H1 (cell line): ENCODE measurements at regions of chr1 and their contacts with region 1.

Region 1: GRCh38 chr1:26053718-26054560 is 8.0 kb upstream of the SLC30A2 start:
- DNase-seq: no peak
- H3K4me3 ChIP-seq: no peak overlapping the region
- H3K27ac ChIP-seq: no peak overlapping the region
- H3K4me1 ChIP-seq: 0 out of 7 replicates have a peak, but pooled peaks cover 0 to 2% (median 0%) of the 10 kb centered on the region in 4 experiments
- H3K27me3 ChIP-seq: peaks cover 0 to 6% (median 2%) of the 10 kb centered on the region in 4 experiments; a peak in 3 of 7 replicates
- CTCF ChIP-seq: no peak
- EP300 ChIP-seq: no peak
- POLR2A ChIP-seq: no peak
- RAD21 ChIP-seq: peak in 1 of 2 experiments; percentile 30; a peak in 1 of 4 replicates

Region 2: DNA sequence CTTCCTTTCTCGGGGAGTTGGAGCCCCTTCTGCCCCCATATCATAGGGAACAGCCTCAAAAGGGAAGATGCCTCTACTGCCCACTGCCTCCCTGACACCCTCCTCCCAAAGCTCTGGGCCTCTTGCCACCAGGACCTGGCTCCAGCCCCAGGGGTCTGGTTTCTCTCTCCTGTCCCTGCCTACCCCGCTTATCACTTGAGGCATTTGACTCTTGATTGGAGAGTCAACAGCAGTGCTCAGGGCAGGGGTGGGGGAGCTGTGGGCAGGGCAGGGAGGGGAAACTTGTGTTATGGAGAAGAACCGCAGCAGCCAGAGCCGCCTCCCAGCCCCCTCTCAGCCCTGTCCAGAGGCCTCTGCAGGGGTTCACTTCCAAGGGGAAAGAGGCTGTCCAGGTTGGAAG is 12.9 kb after region 1 on chr1:
- CTCF ChIA-PET with region 1: interaction called, 32 read pairs
- POLR2A ChIA-PET with region 1: interaction called, 3 read pairs
- DNase-seq: no peak
- H3K4me3 ChIP-seq: no peak overlapping the region
- H3K27ac ChIP-seq: no peak overlapping the region
- H3K4me1 ChIP-seq: peaks cover 0 to 2% (median 0%) of the 10 kb centered on the region in 4 experiments; a peak in 1 of 7 replicates
- H3K27me3 ChIP-seq: no peaks in the 10 kb centered on the region
- CTCF ChIP-seq: no peak
- EP300 ChIP-seq: no peak
- POLR2A ChIP-seq: no peak
- RAD21 ChIP-seq: no peak

Region 3: DNA sequence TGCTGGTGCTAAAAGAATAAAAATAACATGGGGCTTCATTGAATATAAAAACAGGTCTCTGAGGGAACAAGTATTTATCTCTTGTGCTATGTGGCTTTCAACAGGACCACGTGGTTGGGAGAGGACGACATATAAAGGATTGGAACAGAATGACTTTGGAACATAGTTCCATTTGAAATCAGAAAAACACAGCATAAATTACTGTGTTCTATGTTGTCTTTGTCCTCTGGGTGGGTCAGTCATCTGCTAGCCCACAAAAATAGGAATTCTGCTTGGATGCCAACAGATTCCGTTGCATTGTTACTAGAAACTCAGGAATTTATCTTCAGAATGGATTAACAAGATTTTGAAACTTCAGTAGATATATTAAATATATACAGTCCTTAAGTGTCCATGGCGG is 186.0 kb after region 1 on chr1:
- CTCF ChIA-PET with region 1: no interaction called
- POLR2A ChIA-PET with region 1: no interaction called
- DNase-seq: no peak
- H3K4me3 ChIP-seq: no peak overlapping the region
- H3K27ac ChIP-seq: no peak overlapping the region
- H3K4me1 ChIP-seq: peaks cover 0 to 4% (median 1%) of the 10 kb centered on the region in 4 experiments; a peak in 4 of 7 replicates
- H3K27me3 ChIP-seq: no peaks in the 10 kb centered on the region
- CTCF ChIP-seq: no peak
- EP300 ChIP-seq: no peak
- POLR2A ChIP-seq: no peak
- RAD21 ChIP-seq: no peak